Activated naive CD8-positive, alpha-beta T cell treated with anti-CD3 and anti-CD28 coated beads, Interleukin-2, amount 10 ng/mL, durations not matched to agents 7 days and 5 days (primary cell): ENCODE measurements at regions of chrX and their contacts with region 1.

Region 1: DNA sequence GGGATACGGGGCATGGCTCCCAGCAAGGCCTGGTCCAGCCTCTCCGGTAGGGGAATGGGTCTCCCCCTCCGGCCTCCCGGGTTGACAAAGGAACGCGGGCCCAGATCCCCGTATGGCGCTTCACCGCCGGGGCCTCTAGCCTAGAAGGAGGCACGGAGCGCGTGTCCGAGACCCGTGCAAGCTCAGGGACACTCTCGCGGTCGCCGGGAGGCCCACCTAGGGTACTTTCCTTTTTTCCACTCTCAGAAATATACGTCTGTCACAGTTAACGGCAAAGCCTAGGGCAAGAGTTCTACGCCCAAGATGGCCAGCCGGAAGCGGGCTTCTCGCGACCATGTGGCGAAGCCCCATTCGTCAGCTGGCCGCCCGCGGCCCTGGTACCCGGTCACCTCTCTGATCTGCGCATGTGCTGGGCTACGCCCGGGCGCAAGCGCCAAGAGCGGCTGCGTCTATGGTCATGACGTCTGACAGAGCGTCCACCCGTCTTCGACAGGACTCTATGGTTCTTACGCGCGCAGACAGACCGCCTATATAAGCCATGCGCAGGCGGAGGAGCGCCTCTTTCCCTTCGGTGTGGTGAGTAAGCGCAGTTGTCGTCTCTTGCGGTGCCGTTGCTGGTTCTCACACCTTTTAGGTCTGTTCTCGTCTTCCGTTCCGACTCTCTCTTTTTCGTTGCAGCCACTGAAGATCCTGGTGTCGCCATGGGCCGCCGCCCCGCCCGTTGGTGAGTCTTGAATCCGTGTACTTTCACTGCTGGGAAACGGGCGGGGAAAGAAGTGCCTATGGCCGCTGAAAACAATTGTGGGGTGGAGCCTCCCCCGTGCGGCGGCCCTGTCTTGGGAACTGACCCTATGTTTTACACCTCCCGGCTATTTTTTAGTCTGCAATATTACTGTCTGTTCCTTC is at the start of gene RPL10:
- DNase-seq: peak; percentile 87
- ATAC-seq: peak; percentile 86
- H3K4me3 Mint-ChIP-seq: peak within 1 kb of the TSS; percentile 97
- H3K27ac Mint-ChIP-seq: peak within 1 kb of the TSS; percentile 100
- H3K4me1 Mint-ChIP-seq: peaks cover 5% of the 10 kb centered on the region
- H3K27me3 Mint-ChIP-seq: no peaks in the 10 kb centered on the region
- total RNA-seq, gene RPL10: 2,867 to 2,975 TPM

Region 2: GRCh38 chrX:154411322-154411980 is 13.4 kb after region 1 on chrX and contains the start of gene TAFAZZIN:
- POLR2A ChIA-PET with region 1: interaction called, 72 read pairs
- DNase-seq: peak; percentile 80
- ATAC-seq: peak; percentile 59
- H3K4me3 Mint-ChIP-seq: peak within 1 kb of the TSS; percentile 93
- H3K27ac Mint-ChIP-seq: peak within 1 kb of the TSS; percentile 95
- H3K4me1 Mint-ChIP-seq: peaks cover 9% of the 10 kb centered on the region
- H3K27me3 Mint-ChIP-seq: no peaks in the 10 kb centered on the region
- total RNA-seq, gene TAFAZZIN: 94.7 to 95.3 TPM

Region 3: DNA sequence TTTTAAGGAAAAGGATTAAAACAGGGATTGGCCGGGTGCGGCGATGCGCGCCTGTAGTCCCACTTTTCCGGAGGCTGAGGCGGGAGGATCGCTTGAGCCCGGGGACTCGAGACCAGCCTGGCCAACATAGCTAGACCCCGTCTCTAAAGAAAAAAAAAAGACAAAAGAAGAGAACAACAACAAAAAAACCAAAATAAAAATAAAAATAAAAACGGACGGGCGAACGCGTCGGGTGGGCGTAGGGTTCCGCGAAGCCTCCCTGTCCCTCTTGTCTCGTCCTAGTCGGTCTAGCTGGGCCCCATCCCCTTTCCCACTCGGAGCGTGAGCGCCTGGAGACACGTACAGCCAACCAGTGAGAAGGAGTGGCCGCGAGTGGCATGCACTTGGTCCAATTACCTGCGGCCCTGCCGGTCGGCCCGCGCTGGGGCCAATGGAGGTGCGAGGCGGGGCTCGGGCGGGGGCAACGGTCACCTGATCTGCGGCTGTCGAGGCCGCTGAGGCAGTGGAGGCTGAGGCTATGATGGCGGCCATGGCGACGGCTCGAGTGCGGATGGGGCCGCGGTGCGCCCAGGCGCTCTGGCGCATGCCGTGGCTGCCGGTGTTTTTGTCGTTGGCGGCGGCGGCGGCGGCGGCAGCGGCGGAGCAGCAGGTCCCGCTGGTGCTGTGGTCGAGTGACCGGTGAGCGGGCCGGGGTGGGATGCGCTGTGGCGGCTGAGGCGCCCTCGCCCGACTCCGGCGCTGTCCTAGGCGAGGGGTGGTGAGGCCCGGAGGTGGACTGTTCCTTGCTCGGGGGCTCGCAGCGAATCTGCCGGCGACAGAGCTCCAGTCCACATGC is 30.3 kb after region 1 on chrX and contains the start of gene ATP6AP1:
- POLR2A ChIA-PET with region 1: interaction called, 16 read pairs
- DNase-seq: peak; percentile 86
- ATAC-seq: peak; percentile 99
- H3K4me3 Mint-ChIP-seq: peak within 1 kb of the TSS; percentile 80
- H3K27ac Mint-ChIP-seq: peak within 1 kb of the TSS; percentile 77
- H3K4me1 Mint-ChIP-seq: peaks cover 28% of the 10 kb centered on the region
- H3K27me3 Mint-ChIP-seq: no peaks in the 10 kb centered on the region
- total RNA-seq, gene ATP6AP1: 46.9 to 51.1 TPM

Region 4: DNA sequence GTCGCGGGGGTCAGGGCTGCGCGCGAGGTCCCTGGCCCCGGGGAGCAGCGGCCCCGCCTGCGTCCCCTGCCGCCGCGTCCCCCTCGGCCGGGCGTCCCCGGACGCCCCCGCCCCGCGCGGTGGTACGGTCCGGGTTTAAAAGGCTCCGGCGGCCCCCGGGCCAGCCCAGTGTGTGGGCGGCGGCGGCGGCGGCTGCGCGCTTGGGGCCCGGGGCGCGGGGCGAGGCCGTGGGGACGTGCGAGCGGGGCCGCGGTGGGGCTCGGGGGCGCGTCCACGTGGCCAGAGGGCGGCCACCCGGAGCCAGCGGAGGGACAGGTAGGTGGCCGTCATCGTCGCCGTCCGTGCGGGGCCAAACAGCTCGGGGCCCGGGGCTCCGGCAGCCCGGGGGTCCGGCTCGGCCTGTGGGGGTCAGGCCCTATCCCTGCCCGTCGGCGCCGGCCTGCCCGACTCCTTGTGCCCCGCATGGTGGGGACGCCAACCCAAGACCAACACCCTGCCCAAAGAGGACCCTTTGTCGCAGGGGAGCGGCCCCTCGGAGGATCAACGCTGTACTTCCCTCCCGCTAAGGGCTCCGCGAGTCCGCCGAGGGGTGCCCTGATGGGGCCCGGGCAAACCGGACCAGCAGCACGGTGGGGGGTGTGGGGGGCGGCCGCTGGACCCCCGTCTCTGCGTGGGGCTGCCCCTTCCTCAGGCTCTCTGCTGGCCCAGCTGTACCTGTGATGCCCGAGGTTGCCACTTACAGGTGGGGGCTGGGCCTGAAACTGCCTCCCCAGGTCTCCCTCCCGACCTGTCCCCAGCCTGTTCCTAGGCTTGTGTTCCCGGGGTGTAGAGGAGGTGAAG is 60.3 kb after region 1 on chrX and contains the start of gene PLXNA3:
- POLR2A ChIA-PET with region 1: interaction called, 18 read pairs
- DNase-seq: peak; percentile 83
- ATAC-seq: peak; percentile 71
- H3K4me3 Mint-ChIP-seq: peak within 1 kb of the TSS; percentile 98
- H3K27ac Mint-ChIP-seq: peak within 1 kb of the TSS; percentile 98
- H3K4me1 Mint-ChIP-seq: peaks cover 8% of the 10 kb centered on the region
- H3K27me3 Mint-ChIP-seq: no peaks in the 10 kb centered on the region
- total RNA-seq, gene PLXNA3: 62.5 to 64.1 TPM

Region 5: DNA sequence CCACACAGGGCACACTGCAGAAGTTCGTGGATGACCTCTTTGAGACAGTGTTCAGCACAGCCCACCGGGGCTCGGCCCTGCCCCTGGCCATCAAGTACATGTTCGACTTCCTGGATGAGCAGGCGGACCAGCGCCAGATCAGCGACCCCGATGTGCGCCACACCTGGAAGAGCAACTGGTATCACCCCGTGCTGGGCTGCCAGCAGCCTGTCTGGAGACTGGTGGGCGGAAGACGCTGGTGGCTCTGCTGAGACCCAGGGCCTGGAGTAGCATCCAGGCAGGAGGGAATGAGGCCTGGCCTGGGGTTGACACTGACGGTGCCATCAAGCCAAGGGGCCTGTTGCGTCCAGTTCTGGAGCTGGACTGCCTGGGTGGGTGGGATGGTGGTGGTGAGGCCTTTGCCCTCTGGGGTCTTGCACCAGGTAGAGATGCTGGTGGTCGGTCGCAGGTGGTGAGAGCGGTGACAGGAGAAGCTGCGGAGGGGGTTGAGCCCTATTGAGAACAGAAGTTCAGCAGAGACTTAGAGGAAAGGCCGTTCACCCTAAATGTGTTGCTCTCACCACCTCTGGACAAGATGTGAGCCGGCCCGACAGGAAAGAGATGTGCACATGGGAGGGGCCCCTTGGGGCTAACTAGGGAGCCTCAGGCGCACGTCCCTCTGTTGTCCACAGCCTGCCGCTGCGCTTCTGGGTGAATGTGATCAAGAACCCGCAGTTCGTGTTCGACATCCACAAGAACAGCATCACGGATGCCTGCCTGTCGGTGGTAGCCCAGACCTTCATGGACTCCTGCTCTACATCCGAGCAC is 72.6 kb after region 1 on chrX:
- POLR2A ChIA-PET with region 1: no interaction called
- DNase-seq: no peak
- ATAC-seq: no peak
- H3K4me3 Mint-ChIP-seq: no peak overlapping the region
- H3K27ac Mint-ChIP-seq: no peak overlapping the region
- H3K4me1 Mint-ChIP-seq: no peaks in the 10 kb centered on the region
- H3K27me3 Mint-ChIP-seq: no peaks in the 10 kb centered on the region

Region 6: DNA sequence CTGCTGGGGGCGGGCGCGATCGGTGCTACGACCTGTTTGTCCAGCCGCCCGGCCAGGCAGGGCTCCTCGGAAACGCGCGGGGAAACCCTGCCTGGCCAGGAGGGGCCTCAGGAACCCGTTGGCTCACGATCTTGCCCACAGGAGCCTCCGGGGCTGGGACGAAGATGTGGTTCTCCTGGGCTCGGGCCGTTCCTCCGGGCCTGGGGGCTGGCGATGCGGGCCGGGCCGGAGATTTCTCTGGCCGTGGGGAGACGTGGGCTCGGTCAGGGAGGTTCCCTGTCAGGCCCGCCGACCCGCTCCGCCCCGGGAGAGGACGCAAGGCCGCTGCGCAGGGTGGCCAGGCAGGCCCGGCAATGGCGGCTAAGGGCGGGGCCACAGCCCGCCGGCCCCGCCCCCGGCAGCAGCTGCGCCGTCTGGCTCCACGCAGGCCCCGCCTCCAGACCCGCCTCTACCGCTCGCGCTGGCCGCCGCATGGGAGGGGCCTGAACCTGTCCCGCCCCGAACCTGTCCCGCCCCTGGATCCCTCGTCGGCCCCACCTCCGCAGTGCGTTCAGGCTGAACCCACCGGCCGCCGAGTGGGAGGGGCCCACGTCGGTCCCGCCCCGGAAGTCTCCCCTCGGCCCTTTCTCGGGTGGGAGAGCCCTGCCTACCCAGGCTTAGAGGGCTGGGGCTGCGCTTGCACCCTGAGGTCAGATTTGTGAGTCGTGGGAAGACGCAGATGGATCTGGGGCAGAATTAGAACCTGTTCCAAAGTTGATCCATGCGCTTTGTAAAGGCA is 118.0 kb after region 1 on chrX and contains the start of gene FAM3A:
- POLR2A ChIA-PET with region 1: interaction called, 18 read pairs
- DNase-seq: peak; percentile 93
- ATAC-seq: peak; percentile 86
- H3K4me3 Mint-ChIP-seq: peak within 1 kb of the TSS; percentile 86
- H3K27ac Mint-ChIP-seq: peak within 1 kb of the TSS; percentile 92
- H3K4me1 Mint-ChIP-seq: peaks cover 22% of the 10 kb centered on the region
- H3K27me3 Mint-ChIP-seq: no peaks in the 10 kb centered on the region
- total RNA-seq, gene FAM3A: 42.3 to 45.4 TPM